CD4-positive, alpha-beta memory T cell (primary cell): ENCODE measurements at regions of chr1 and their contacts with region 1.

Region 1: GRCh38 chr1:226121587-226122400 is 59.3 kb downstream of the H3-3A start:
- DNase-seq: peak; percentile 75 to 85 (median 80)
- H3K4me3 ChIP-seq: peak overlapping the region in 1 of 2 donors; percentile 58
- H3K4me3 Mint-ChIP-seq: peak overlapping the region in 7 of 8 donors; percentile 48 to 89 (median 69)
- H3K27ac ChIP-seq: peak overlapping the region; percentile 68
- H3K27ac Mint-ChIP-seq: peak overlapping the region in 5 of 7 donors; percentile 48 to 93 (median 74)
- H3K4me1 ChIP-seq: peaks cover 29% of the 10 kb centered on the region
- H3K4me1 Mint-ChIP-seq: peaks cover 18 to 35% (median 27%) of the 10 kb centered on the region in 4 donors
- H3K27me3 ChIP-seq: no peaks in the 10 kb centered on the region
- H3K27me3 Mint-ChIP-seq: no peaks in the 10 kb centered on the region

Region 2: GRCh38 chr1:225474986-225475820 is 646.6 kb before region 1 on chr1:
- CTCF ChIA-PET with region 1: interaction called, 5 read pairs
- POLR2A ChIA-PET with region 1: no interaction called
- intact Hi-C with region 1: loop called (anchors 5 kb)
- DNase-seq: peak in 4 of 5 donors; percentile 66 to 80 (median 69)
- H3K4me3 ChIP-seq: no peak overlapping the region
- H3K4me3 Mint-ChIP-seq: no peak overlapping the region
- H3K27ac ChIP-seq: no peak overlapping the region
- H3K27ac Mint-ChIP-seq: peak overlapping the region in 5 of 7 donors; percentile 5 to 75 (median 23)
- H3K4me1 ChIP-seq: peaks cover 36% of the 10 kb centered on the region
- H3K4me1 Mint-ChIP-seq: peaks cover 27 to 50% (median 35%) of the 10 kb centered on the region in 4 donors
- H3K27me3 ChIP-seq: no peaks in the 10 kb centered on the region
- H3K27me3 Mint-ChIP-seq: peaks cover 0 to 3% of the 10 kb centered on the region in 2 donors

Region 3: GRCh38 chr1:225962440-225962975 is 159.3 kb before region 1 on chr1:
- CTCF ChIA-PET with region 1: no interaction called
- POLR2A ChIA-PET with region 1: no interaction called
- intact Hi-C with region 1: no loop called
- DNase-seq: peak in 4 of 5 donors; percentile 31 to 45 (median 38)
- H3K4me3 ChIP-seq: no peak overlapping the region
- H3K4me3 Mint-ChIP-seq: no peak overlapping the region
- H3K27ac ChIP-seq: no peak overlapping the region
- H3K27ac Mint-ChIP-seq: no peak overlapping the region
- H3K4me1 ChIP-seq: peaks cover 4% of the 10 kb centered on the region
- H3K4me1 Mint-ChIP-seq: peaks cover 0 to 5% (median 3%) of the 10 kb centered on the region in 4 donors
- H3K27me3 ChIP-seq: no peaks in the 10 kb centered on the region
- H3K27me3 Mint-ChIP-seq: peaks cover 0 to 2% of the 10 kb centered on the region in 2 donors

Region 4: GRCh38 chr1:226083302-226084101 is 38.3 kb before region 1 on chr1:
- CTCF ChIA-PET with region 1: interaction called, 7 read pairs
- POLR2A ChIA-PET with region 1: interaction called, 5 read pairs
- intact Hi-C with region 1: loop called (anchors 5 kb)
- DNase-seq: peak; percentile 84 to 92 (median 89)
- H3K4me3 ChIP-seq: peak overlapping the region; percentile 36 to 69
- H3K4me3 Mint-ChIP-seq: peak overlapping the region; percentile 85 to 98 (median 90)
- H3K27ac ChIP-seq: peak overlapping the region; percentile 48
- H3K27ac Mint-ChIP-seq: peak overlapping the region in 6 of 7 donors; percentile 28 to 87 (median 78)
- H3K4me1 ChIP-seq: peaks cover 14% of the 10 kb centered on the region
- H3K4me1 Mint-ChIP-seq: peaks cover 4 to 11% (median 7%) of the 10 kb centered on the region in 4 donors
- H3K27me3 ChIP-seq: no peaks in the 10 kb centered on the region
- H3K27me3 Mint-ChIP-seq: no peaks in the 10 kb centered on the region

Region 5: DNA sequence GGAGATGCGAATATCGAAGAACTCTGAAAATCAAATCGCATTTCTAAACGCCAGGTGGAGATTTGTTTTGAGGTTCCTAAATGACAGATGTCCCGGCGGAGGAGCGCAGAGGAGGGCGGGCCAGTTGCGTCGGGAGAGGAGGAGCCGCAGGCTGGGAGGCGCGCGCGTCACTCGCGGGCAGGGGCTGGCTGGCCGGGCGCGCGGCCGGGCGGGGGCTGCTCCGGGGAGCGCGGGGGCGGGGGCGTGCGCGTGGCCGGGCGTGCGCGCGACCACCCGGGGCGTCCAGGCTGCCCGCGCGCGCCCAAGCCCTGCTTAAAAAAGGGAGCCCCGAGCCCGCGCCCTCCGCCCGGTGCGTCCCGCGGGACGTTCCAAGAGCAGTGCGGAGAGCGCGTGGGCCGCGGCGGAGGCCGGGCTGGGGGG is 12.0 kb before region 1 on chr1:
- CTCF ChIA-PET with region 1: interaction called, 44 read pairs
- POLR2A ChIA-PET with region 1: interaction called, 8 read pairs
- intact Hi-C with region 1: loop called (anchors 1 kb)
- DNase-seq: peak; percentile 54 to 79 (median 70)
- H3K4me3 ChIP-seq: peak overlapping the region; percentile 11 to 54
- H3K4me3 Mint-ChIP-seq: peak overlapping the region; percentile 90 to 94 (median 92)
- H3K27ac ChIP-seq: peak overlapping the region; percentile 59
- H3K27ac Mint-ChIP-seq: peak overlapping the region; percentile 76 to 94 (median 88)
- H3K4me1 ChIP-seq: peaks cover 13% of the 10 kb centered on the region
- H3K4me1 Mint-ChIP-seq: peaks cover 5 to 21% (median 11%) of the 10 kb centered on the region in 4 donors
- H3K27me3 ChIP-seq: no peaks in the 10 kb centered on the region
- H3K27me3 Mint-ChIP-seq: no peaks in the 10 kb centered on the region

Region 6: GRCh38 chr1:226162898-226163297 is 41.1 kb after region 1 on chr1:
- CTCF ChIA-PET with region 1: interaction called, 11 read pairs
- POLR2A ChIA-PET with region 1: no interaction called
- intact Hi-C with region 1: no loop called
- DNase-seq: no peak
- H3K4me3 ChIP-seq: no peak overlapping the region
- H3K4me3 Mint-ChIP-seq: no peak overlapping the region
- H3K27ac ChIP-seq: no peak overlapping the region
- H3K27ac Mint-ChIP-seq: peak overlapping the region in 1 of 7 donors; percentile 57
- H3K4me1 ChIP-seq: peaks cover 4% of the 10 kb centered on the region
- H3K4me1 Mint-ChIP-seq: peaks cover 2 to 16% (median 5%) of the 10 kb centered on the region in 4 donors
- H3K27me3 ChIP-seq: no peaks in the 10 kb centered on the region
- H3K27me3 Mint-ChIP-seq: no peaks in the 10 kb centered on the region

Region 7: DNA sequence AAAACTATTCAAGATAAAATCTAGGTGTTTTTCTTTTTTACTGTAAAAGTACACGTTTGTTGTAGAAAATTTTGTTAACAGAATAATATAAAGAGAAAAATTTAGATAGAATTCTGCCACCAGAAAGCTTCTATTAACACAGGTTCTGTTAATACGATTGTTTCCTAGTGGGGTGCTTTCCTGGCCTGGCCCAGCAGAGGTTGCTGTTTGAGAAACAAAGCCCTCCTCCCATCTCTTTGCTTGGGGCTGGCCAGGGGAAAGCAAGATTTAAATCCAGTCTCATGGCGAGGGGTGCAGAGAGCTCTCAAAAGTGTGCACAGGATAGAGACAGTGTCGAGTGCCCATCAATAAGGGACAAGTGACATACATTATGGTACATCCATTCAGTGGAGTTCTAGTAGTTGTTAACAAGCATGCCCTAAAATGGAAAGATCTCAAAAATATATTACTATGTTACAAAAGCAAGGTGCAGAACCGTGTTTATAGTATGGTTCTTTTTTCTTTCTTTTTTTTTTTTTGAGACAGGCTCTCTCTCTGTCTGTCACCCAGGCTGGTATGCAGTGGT is 79.3 kb after region 1 on chr1:
- CTCF ChIA-PET with region 1: interaction called, 207 read pairs
- POLR2A ChIA-PET with region 1: interaction called, 14 read pairs
- intact Hi-C with region 1: loop called (anchors 1 kb)
- DNase-seq: no peak
- H3K4me3 ChIP-seq: no peak overlapping the region
- H3K4me3 Mint-ChIP-seq: no peak overlapping the region
- H3K27ac ChIP-seq: no peak overlapping the region
- H3K27ac Mint-ChIP-seq: no peak overlapping the region
- H3K4me1 ChIP-seq: no peaks in the 10 kb centered on the region
- H3K4me1 Mint-ChIP-seq: peaks cover 0 to 2% (median 0%) of the 10 kb centered on the region in 4 donors
- H3K27me3 ChIP-seq: no peaks in the 10 kb centered on the region
- H3K27me3 Mint-ChIP-seq: peaks cover 3 to 12% of the 10 kb centered on the region in 2 donors

Region 8: GRCh38 chr1:226220473-226221214 is 98.8 kb after region 1 on chr1:
- CTCF ChIA-PET with region 1: no interaction called
- POLR2A ChIA-PET with region 1: no interaction called
- intact Hi-C with region 1: no loop called
- DNase-seq: no peak
- H3K4me3 ChIP-seq: no peak overlapping the region
- H3K4me3 Mint-ChIP-seq: no peak overlapping the region
- H3K27ac ChIP-seq: no peak overlapping the region
- H3K27ac Mint-ChIP-seq: no peak overlapping the region
- H3K4me1 ChIP-seq: peaks cover 5% of the 10 kb centered on the region
- H3K4me1 Mint-ChIP-seq: peaks cover 0 to 2% (median under 1%) of the 10 kb centered on the region in 4 donors
- H3K27me3 ChIP-seq: peaks cover 13% of the 10 kb centered on the region
- H3K27me3 Mint-ChIP-seq: peaks cover 13 to 27% of the 10 kb centered on the region in 2 donors

Region 9: DNA sequence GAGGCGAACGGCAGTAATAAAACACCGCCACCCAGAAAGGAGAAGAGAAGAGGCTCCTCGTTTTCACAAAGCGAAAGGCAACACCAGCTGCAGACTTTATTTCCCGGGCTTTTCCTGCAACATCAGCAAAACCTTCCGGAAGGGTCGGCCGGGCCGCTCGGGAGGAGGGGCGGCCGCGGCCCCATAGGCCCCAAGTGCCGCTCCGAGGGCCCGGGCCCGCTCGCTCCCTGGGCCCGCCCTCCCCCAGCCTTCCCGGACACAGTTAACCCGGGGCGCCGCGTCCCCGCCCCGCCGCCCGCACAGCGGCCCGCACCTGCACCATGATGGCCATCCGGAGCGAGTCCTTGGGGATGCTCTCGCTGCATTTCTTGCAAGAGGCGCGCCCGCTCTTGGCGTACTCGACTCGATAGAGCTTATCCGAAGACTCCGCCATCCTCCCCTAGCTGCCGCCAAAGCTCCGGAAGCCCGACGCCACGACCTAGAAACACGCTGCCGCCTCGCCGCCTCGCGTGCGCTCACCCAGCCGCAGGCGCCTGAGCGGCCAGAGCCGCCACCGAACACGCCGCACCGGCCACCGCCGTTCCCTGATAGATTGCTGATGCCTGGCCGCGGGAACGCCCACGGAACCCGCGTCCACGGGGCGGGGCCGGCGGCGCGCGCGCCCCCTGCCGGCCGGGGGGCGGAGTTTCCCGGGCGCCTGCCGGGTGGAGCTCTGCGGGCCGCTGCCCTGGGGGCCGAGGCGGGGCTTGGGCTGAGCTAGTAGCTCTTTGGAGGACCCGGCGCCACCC is 285.9 kb after region 1 on chr1 and contains the start of gene PARP1:
- CTCF ChIA-PET with region 1: interaction called, 30 read pairs
- POLR2A ChIA-PET with region 1: interaction called, 4 read pairs
- intact Hi-C with region 1: loop called (anchors 2 kb)
- DNase-seq: peak; percentile 91 to 94 (median 91)
- H3K4me3 ChIP-seq: peak within 1 kb of the TSS; percentile 68 to 83
- H3K4me3 Mint-ChIP-seq: peak within 1 kb of the TSS; percentile 94 to 99 (median 98)
- H3K27ac ChIP-seq: peak within 1 kb of the TSS; percentile 76
- H3K27ac Mint-ChIP-seq: peak within 1 kb of the TSS; percentile 94 to 98 (median 96)
- H3K4me1 ChIP-seq: peaks cover 46% of the 10 kb centered on the region
- H3K4me1 Mint-ChIP-seq: peaks cover 32 to 60% (median 43%) of the 10 kb centered on the region in 4 donors
- H3K27me3 ChIP-seq: no peaks in the 10 kb centered on the region
- H3K27me3 Mint-ChIP-seq: no peaks in the 10 kb centered on the region
- total RNA-seq, gene PARP1: 120 to 129 TPM